AG04450 (cell line): ENCODE measurements at regions of chr11 and their contacts with region 1.

Region 1: DNA sequence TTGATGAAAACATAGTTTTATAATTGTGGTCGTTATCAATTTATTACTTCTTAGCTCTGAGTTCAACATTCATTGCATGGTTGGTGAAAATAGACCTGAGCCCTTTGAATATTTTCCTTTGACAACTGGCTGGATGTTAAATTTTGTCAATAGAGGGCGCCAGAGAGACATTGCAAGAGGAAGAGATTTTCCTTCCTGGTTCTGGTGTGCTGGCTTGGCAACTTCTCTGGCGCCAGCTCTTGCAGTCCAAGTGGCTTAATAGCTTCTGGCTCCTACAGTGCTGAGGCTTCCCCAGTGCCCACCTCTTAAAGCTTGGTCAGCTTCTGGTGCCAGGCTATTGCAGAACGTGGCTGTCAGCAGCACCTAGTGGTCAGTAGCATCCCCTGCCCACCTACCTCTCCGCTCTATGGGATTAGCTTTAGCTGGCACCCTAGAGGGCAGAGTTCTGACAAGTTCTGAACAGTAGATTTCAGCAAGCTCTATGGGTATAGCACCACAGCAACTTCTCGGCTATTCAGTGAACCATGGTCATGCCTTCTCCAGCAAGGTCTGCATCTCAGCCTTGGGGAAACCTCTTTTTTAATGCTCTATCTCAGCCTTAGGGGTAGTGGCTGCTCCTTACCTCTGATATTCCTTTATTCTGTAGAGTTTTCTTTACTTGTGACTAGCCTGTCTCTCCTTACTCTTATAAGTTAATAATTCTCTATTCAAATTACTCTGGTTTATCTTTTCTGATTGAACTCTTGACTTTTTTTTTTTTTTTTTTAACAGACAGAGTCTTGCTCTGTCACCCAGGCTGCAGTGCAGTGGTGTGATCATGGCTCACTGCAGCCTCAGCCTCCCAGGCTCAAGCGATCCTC is 59.4 kb downstream of the ACER3 start:
- DNase-seq: peak; percentile 65
- H3K4me3 ChIP-seq: no peak overlapping the region
- H3K27ac ChIP-seq: no peak overlapping the region
- H3K27me3 ChIP-seq: no peaks in the 10 kb centered on the region
- CTCF ChIP-seq: peak; percentile 98

Region 2: GRCh38 chr11:76721755-76722677 is 198.1 kb before region 1 on chr11:
- CTCF ChIA-PET with region 1: interaction called, 97 read pairs
- POLR2A ChIA-PET with region 1: no interaction called
- DNase-seq: peak; percentile 57
- H3K4me3 ChIP-seq: no peak overlapping the region
- H3K27ac ChIP-seq: no peak overlapping the region
- H3K27me3 ChIP-seq: peaks cover 34% of the 10 kb centered on the region
- CTCF ChIP-seq: peak; percentile 91

Region 3: DNA sequence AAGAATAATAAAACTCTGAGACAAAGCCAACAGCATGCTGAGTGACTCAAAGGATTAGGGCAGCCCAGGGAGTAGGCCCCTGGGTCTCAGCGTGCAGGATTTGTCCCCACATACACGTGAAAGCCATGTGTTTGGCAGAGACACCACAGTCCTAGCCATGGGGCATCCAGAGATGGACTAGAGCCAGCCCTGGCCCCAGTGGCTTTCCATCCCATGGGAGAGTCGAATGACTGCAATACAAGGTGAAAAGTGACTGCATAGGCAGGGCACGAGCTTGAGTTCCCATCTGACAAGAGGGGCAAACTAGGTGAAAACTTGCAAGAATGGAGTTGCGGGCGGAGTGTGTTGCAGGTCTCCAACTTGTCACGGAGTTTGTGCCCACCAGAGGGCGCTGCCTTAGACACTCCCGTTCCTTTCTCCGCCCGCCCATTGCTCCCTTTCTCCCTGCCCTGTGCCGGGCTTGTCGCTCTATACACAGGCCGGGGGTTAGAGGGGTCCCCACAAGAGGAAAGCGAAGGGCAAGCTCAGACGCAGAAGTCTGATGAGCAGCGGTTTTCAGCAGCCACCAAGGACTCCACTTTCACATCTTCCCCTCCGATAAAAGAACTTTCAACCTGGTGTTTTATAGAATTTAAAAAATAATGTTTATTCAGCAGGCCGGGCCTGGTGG is 112.8 kb before region 1 on chr11:
- CTCF ChIA-PET with region 1: interaction called, 236 read pairs
- POLR2A ChIA-PET with region 1: no interaction called
- DNase-seq: no peak
- H3K4me3 ChIP-seq: no peak overlapping the region
- H3K27ac ChIP-seq: no peak overlapping the region
- H3K27me3 ChIP-seq: no peaks in the 10 kb centered on the region
- CTCF ChIP-seq: peak; percentile 81

Region 4: GRCh38 chr11:76903329-76903728 is 16.8 kb before region 1 on chr11:
- CTCF ChIA-PET with region 1: interaction called, 68 read pairs
- POLR2A ChIA-PET with region 1: no interaction called
- DNase-seq: no peak
- H3K4me3 ChIP-seq: no peak overlapping the region
- H3K27ac ChIP-seq: no peak overlapping the region
- H3K27me3 ChIP-seq: no peaks in the 10 kb centered on the region
- CTCF ChIP-seq: no peak

Region 5: GRCh38 chr11:76974179-76974891 is 54.2 kb after region 1 on chr11:
- CTCF ChIA-PET with region 1: interaction called, 15 read pairs
- POLR2A ChIA-PET with region 1: no interaction called
- DNase-seq: no peak
- H3K4me3 ChIP-seq: no peak overlapping the region
- H3K27ac ChIP-seq: no peak overlapping the region
- H3K27me3 ChIP-seq: no peaks in the 10 kb centered on the region
- CTCF ChIP-seq: no peak

Region 6: GRCh38 chr11:77047007-77047927 is 127.2 kb after region 1 on chr11:
- CTCF ChIA-PET with region 1: interaction called, 10 read pairs
- POLR2A ChIA-PET with region 1: no interaction called
- DNase-seq: peak; percentile 79
- H3K4me3 ChIP-seq: peak overlapping the region; percentile 59
- H3K27ac ChIP-seq: no peak overlapping the region
- H3K27me3 ChIP-seq: no peaks in the 10 kb centered on the region
- CTCF ChIP-seq: peak; percentile 77